Right ventricle myocardium inferior (tissue), 1 donor: ENCODE measurements at regions of chr7 and their contacts with region 1.

Region 1: GRCh38 chr7:35037526-35038339 is 448 bp upstream of the DPY19L1 start:
- DNase-seq: peak; percentile 98
- ATAC-seq: peak; percentile 94

Region 2: DNA sequence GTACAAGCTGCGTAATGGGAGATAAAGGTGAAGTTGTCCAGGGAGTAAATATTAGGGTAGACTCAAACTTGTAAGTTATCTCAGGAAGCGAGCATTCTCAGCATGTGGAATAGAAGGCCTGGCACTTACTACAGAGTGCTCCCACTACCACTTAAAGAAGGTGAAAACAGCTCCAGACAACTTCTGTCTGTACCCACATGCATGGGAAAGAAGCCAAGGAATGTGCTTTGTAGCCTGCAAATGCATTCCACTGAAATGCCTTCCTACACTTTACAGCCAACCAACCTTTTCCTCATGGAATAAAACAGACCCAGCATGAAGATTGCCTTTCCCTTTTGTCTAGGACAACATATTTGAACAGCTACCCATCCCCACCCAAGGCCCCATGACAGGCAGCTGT is 425.1 kb before region 1 on chr7:
- intact Hi-C with region 1: loop called (anchors 10 kb)
- DNase-seq: no peak
- ATAC-seq: peak; percentile 91

Region 3: DNA sequence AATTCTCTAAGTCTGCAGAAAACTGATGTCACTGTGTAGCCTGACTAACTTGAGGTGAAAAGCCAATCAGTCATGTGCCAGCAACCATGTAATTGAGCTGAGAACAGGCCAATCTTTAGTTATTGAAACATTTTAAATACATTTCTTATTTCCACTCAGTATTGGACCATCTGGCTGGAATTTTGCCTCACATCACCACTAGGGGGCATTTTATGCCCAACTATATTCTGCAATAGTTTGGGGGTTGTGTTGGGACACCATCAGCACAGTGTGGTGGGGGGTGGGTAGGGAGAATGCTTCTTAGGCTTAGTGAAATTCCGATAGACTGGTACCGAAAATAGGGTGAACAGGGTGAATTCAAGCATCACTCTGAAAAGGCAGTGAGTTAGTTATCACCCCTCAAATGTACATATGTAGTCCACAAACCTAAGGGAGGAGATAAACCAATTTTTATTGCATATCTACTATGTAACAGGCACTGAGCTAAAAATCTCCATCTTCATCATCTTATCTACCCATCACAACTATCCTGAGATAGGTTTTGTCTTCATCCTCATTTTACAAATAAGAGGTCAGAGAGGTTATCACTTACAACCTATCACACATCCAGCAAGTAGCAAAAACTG is 361.9 kb before region 1 on chr7:
- intact Hi-C with region 1: loop called (anchors 10 kb)
- DNase-seq: no peak
- ATAC-seq: no peak

Region 4: GRCh38 chr7:34759452-34760125 is 278.1 kb before region 1 on chr7:
- intact Hi-C with region 1: loop called (anchors 10 kb)
- DNase-seq: no peak
- ATAC-seq: no peak

Region 5: DNA sequence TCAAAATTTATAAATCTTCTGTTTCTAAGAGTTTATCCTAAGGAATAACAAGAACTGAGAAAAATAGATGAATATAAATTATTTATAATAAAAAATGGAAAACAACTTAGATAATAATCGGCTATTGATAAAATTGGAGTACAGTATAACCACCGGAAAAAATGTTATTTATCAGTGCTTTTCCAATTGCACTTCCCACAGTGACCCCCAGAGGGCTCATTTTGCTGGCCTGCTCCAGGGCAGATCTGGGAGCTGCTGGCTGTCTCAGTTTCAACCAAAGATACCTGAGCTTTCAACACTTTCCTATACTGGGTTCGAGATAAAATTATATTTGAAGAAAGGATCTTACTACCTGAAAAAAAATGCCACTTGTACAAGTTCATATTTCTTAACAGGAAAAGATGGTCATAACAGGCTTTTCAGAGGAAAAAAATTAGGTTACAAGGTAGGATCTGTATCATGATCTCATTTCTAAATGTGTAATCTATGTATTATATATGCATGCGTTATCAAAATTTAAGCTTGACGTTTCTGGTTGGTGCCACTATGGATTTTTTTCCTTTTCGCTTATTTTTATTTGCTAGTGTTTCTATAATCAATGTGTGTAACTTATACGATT is 214.0 kb before region 1 on chr7:
- intact Hi-C with region 1: loop called (anchors 5 kb)
- DNase-seq: no peak
- ATAC-seq: no peak

Region 6: DNA sequence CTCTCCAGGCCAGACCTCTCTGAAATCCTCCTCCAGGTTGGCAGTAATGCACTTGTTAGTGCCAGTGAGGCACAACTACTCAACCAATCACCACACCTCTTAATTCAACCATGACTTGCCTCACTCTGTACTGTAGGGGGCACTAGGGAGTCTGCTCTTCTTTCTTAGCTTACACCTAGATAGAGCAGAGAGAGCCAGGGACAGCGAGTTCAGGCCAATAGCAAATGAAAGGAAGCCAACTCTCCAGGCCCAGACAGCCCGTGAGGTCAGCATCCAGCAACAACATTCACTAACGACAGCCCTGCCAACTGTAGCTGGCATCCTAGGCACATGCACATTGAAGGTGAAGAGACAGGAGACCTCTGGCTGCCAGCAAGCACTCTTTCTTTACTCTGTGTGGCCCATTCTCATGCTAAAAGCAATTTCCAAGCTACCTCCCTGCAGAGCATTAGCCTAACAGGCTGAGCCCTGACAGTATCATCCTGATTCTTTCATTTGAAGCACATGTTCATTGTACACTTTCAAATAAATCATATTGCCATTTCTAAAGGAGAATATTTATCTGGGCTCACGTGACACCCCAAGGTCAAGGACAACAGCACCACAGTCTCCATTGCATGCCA is 136.7 kb before region 1 on chr7:
- intact Hi-C with region 1: loop called (anchors 2 kb)
- DNase-seq: no peak
- ATAC-seq: peak; percentile 92